ENCODE measurements at regions of chr12 and their contacts with region 1.

Region 1: DNA sequence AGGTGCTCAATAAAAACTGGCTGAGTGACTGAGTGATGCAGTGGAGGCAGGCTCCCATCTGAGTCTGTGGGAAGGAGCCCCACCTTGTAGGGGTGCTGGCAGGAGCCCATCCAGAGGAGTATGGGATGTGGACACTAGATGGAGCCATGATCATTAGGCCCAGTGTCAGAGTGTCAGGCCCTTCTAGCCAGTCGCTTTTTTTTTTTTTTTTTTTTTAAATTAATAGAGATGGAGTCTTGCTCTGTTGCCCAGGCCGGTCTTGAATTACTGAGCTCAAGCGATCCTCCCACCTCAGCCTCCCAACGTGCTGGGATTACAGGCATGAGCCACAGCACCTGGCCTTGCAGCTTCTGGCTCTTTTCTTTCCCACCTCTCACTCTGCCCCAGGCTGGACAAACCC is 11.5 kb downstream of the RITA1 start:
- DNase-seq: peak; percentile 82
- H3K4me3 ChIP-seq: no peak overlapping the region
- H3K27ac ChIP-seq: no peak overlapping the region
- H3K4me1 ChIP-seq: peaks cover 23% of the 10 kb centered on the region
- H3K27me3 ChIP-seq: no peaks in the 10 kb centered on the region
- CTCF ChIP-seq: peak; percentile 63 to 81
- POLR2A ChIP-seq: no peak

Region 2: DNA sequence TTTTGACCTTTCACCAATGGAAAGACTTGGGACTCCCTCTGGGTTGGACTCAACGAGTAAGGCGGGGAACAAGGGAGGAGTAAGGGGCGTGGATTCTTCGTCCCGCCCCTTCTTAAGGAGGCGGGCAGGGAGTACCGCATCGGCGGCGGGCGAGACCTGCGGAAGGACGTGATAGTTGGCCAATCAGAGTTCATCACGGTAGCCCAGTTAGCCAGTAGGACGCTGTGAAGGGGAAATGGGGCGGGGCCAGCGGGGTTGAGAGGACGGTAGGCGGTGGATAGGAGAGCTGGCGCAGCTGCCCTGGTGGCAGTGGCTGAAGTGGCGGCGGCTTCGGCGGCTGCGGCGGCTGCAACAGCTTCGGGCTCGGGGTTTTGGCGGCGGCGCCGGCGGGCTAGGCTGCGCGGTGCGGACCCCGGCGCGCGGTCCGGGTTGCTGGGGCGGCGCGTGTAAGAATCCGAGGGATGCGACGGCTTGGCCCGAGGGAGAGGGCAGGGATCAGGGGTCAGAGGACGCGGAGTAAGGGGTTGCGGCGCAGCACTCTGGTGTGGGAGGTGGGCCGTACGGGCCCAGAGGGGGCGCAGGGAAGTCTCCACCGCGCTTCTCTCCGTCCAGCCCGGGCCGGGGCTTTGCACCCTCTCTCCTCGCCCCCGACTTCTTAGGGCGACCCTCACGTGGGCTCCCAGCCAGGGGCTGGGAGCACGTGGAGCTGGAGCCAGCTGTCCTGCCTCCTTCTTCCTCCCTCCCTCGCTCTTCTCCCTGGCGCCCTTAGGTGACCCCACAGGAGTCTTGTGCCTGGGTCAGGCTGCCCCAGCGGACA is 24.4 kb after region 1 on chr12 and contains the start of gene TPCN1:
- CTCF ChIA-PET with region 1: interaction called, 9 read pairs
- POLR2A ChIA-PET with region 1: interaction called, 8 read pairs
- dilution Hi-C with region 1: no loop called
- intact Hi-C with region 1: loop called (anchors 1 kb)
- DNase-seq: peak; percentile 100
- H3K4me3 ChIP-seq: peak within 1 kb of the TSS; percentile 40 to 98 (median 69)
- H3K27ac ChIP-seq: peak within 1 kb of the TSS; percentile 12
- H3K4me1 ChIP-seq: peaks cover 23% of the 10 kb centered on the region
- H3K27me3 ChIP-seq: no peaks in the 10 kb centered on the region
- CTCF ChIP-seq: peak in 1 of 2 donors; percentile 16
- POLR2A ChIP-seq: peak; percentile 96
- total RNA-seq, gene TPCN1: 17.9 and 28.3 TPM in 2 replicates

Region 3: GRCh38 chr12:113247123-113248055 is 50.4 kb after region 1 on chr12:
- CTCF ChIA-PET with region 1: interaction called, 10 read pairs
- POLR2A ChIA-PET with region 1: no interaction called
- dilution Hi-C with region 1: no loop called
- intact Hi-C with region 1: no loop called
- DNase-seq: peak; percentile 67
- H3K4me3 ChIP-seq: no peak overlapping the region
- H3K27ac ChIP-seq: peak overlapping the region; percentile 2
- H3K4me1 ChIP-seq: peaks cover 31% of the 10 kb centered on the region
- H3K27me3 ChIP-seq: no peaks in the 10 kb centered on the region
- CTCF ChIP-seq: no peak
- POLR2A ChIP-seq: no peak

Region 4: DNA sequence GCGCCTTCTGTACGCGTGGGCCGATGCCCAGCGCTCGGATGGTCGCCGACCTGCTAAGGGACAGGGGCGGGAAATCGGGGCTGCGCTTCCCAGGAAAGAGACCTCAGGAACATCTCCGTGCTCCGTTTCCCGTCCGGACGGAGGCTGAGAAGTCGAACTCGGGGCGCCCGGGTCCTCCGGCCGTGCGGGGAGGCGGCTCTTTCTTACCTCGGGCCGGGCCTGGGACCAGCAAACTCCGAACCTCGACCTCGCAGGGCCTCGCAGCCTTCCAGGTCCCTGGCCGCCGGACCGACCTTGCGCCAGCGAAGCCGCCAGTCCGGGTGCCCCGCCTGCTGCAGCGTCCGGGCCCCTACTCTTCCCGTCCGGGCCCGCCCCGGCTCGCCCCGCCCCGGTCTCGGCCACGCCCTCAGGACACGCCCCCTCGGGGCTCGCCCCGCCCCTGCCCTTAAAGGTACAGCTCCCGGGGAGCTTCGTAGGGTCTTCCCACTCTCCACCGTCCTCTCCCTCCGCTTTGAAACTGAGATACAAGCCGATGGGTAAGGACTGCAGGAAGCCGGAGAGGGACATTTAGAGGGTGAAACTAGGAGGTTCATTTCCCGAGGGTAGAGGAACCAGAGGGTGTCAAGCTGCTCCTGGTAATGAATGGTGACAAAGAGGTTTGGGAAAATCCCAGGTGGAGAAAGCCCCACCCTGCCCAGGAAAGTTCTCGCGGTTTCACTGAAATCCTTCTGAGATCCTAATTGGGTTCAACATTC is 138.0 kb after region 1 on chr12 and contains the start of gene SLC8B1:
- CTCF ChIA-PET with region 1: no interaction called
- POLR2A ChIA-PET with region 1: no interaction called
- dilution Hi-C with region 1: no loop called
- intact Hi-C with region 1: loop called (anchors 1 kb)
- DNase-seq: peak; percentile 75
- H3K4me3 ChIP-seq: peak within 1 kb of the TSS; percentile 70 to 79 (median 78)
- H3K27ac ChIP-seq: peak within 1 kb of the TSS; percentile 30
- H3K4me1 ChIP-seq: peaks cover 18% of the 10 kb centered on the region
- H3K27me3 ChIP-seq: no peaks in the 10 kb centered on the region
- CTCF ChIP-seq: no peak
- POLR2A ChIP-seq: peak; percentile 83
- total RNA-seq, gene SLC8B1: 28.4 and 29.9 TPM in 2 replicates

Region 5: DNA sequence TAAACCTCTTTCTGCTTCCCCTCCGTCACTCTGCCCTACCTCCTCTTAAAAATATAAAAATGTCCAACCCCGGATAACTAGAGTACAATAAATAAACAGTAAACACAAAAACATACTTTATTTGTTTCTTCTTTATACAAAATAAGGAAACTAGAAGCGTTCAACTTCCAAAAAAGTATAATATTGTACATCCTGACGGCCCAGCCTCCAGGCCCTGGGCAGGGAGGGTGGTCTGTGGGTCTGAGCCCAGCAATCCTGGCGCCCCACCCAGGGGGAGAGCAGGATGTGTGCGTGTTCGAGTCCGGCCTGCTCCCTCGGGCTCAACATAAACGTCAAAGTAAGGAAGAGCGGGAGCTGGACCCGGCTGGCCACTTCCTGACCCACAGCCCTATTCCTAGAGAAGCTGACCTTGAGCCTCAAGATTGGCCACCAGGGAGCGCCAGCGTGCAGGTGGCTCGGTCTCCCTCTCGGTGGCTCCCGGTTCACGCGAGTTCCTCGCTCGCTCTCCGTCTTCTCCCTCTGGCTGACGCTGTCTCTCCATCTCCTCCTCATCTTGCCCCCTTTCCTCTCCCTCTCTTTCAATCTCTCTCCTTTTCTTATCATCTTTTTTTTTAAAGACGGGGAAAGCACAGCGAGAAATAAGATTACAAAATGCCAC is 265.2 kb after region 1 on chr12:
- CTCF ChIA-PET with region 1: interaction called, 3 read pairs
- POLR2A ChIA-PET with region 1: no interaction called
- dilution Hi-C with region 1: no loop called
- intact Hi-C with region 1: loop called (anchors 1 kb)
- DNase-seq: peak; percentile 65
- H3K4me3 ChIP-seq: no peak overlapping the region
- H3K27ac ChIP-seq: no peak overlapping the region
- H3K4me1 ChIP-seq: no peaks in the 10 kb centered on the region
- H3K27me3 ChIP-seq: peaks cover 32 to 54% of the 10 kb centered on the region in 2 experiments
- CTCF ChIP-seq: peak; percentile 84 to 98
- POLR2A ChIP-seq: no peak